B cell (primary cell): ENCODE measurements at regions of chr19 and their contacts with region 1.

Region 1: GRCh38 chr19:46840136-46840942 is 10.3 kb downstream of the AP2S1 start:
- DNase-seq: peak; percentile 82
- ATAC-seq: peak; percentile 95
- H3K4me3 ChIP-seq: no peak overlapping the region
- H3K4me3 Mint-ChIP-seq: no peak overlapping the region
- H3K27ac ChIP-seq: no peak overlapping the region
- H3K27ac Mint-ChIP-seq: no peak overlapping the region
- H3K4me1 ChIP-seq: peaks cover 0 to 6% of the 10 kb centered on the region in 2 donors
- H3K4me1 Mint-ChIP-seq: peaks cover 3% of the 10 kb centered on the region
- H3K27me3 ChIP-seq: no peaks in the 10 kb centered on the region
- H3K27me3 Mint-ChIP-seq: no peaks in the 10 kb centered on the region
- CTCF ChIP-seq: peak; percentile 85

Region 2: DNA sequence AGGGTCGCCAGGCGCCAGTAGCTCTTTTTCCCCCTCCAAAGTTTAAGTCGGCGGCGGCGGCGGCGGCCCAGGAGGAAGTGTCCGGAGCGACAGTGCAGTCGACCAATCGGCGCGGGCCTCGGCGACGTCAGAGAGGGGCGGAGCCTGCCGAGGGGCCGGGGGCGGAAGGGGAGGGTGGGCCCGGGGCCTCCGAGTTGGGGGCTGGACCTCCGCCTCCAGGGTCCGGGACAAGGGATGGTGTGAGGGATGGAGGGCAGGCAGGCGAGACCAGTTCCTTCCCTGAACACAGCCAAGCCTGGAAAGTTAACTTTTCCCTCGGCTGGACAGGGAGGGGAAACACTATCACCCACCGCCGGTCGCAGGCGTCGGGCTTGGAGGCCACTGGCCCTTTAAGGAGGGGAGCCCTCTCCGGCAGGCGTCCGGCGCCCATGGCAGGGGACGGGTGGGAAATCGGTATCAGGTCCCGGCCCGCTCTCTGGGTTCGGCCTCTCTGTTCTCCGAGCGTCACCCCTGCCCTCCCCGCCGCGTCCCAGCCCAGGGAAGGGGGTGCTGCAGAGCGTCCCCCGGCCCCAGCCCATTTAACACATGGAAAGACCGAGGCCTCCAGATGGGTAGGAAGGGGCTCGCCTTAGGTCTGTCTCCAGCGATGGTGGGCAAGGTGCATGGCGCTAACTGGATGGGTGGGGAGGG is 123.2 kb before region 1 on chr19 and contains the start of gene PRKD2:
- CTCF ChIA-PET with region 1: interaction called, 10 read pairs
- POLR2A ChIA-PET with region 1: no interaction called
- intact Hi-C with region 1: no loop called
- DNase-seq: peak; percentile 89
- ATAC-seq: peak; percentile 48
- H3K4me3 ChIP-seq: peak within 1 kb of the TSS; percentile 77 to 99 (median 92)
- H3K4me3 Mint-ChIP-seq: peak within 1 kb of the TSS; percentile 97
- H3K27ac ChIP-seq: peak within 1 kb of the TSS; percentile 89 to 92
- H3K27ac Mint-ChIP-seq: peak within 1 kb of the TSS; percentile 95
- H3K4me1 ChIP-seq: peaks cover 58 to 75% of the 10 kb centered on the region in 2 donors
- H3K4me1 Mint-ChIP-seq: peaks cover 66% of the 10 kb centered on the region
- H3K27me3 ChIP-seq: no peaks in the 10 kb centered on the region
- H3K27me3 Mint-ChIP-seq: no peaks in the 10 kb centered on the region
- CTCF ChIP-seq: no peak
- total RNA-seq, gene PRKD2: 185 and 192 TPM in 2 replicates

Region 3: GRCh38 chr19:46753420-46754155 is 86.8 kb before region 1 on chr19:
- CTCF ChIA-PET with region 1: interaction called, 245 read pairs
- POLR2A ChIA-PET with region 1: interaction called, 4 read pairs
- intact Hi-C with region 1: loop called (anchors 1 kb)
- DNase-seq: peak; percentile 78
- ATAC-seq: peak; percentile 82
- H3K4me3 ChIP-seq: no peak overlapping the region
- H3K4me3 Mint-ChIP-seq: no peak overlapping the region
- H3K27ac ChIP-seq: no peak overlapping the region
- H3K27ac Mint-ChIP-seq: peak overlapping the region; percentile 32
- H3K4me1 ChIP-seq: peaks cover 0 to 7% of the 10 kb centered on the region in 2 donors
- H3K4me1 Mint-ChIP-seq: peaks cover 18% of the 10 kb centered on the region
- H3K27me3 ChIP-seq: no peaks in the 10 kb centered on the region
- H3K27me3 Mint-ChIP-seq: no peaks in the 10 kb centered on the region
- CTCF ChIP-seq: peak; percentile 65

Region 4: DNA sequence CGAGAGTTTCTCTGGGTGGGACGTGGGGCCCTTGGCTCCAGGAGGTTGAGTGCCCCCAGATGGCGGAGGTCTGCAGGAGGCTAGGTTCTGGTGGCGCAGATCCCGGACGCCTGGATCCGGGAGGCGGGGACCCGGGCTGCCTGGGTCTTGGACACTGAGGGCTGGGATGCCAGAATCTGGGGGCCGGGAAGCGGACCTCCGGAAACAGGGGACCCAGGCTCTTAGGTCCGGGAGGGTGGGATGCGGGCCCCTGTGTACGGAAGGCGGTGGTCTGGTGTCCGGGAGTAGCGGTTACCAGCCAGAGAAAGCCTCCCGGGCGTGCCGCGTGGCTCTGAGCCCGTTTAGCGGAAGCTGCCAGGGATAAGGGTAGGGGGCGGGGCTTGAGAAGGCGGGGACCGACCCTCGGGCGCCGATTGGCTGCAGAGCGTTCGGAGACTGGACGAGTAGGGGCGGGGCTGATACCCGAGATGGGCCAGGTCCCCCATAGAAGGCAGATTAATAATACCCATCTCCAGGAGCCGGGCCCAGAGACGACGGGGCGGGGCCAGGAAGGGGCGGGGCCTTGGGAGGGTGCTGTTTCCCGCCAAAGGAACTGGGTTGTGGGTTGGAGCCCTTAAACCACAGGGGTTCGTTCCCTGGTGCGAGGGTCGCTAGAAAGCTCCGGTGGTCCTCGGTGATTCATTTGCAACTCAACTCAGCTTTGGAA is 51.9 kb before region 1 on chr19 and contains the start of gene SLC1A5:
- CTCF ChIA-PET with region 1: interaction called, 22 read pairs
- POLR2A ChIA-PET with region 1: interaction called, 9 read pairs
- intact Hi-C with region 1: loop called (anchors 1 kb)
- DNase-seq: peak; percentile 97
- ATAC-seq: peak; percentile 86
- H3K4me3 ChIP-seq: peak within 1 kb of the TSS; percentile 67 to 95 (median 79)
- H3K4me3 Mint-ChIP-seq: peak within 1 kb of the TSS; percentile 93
- H3K27ac ChIP-seq: peak within 1 kb of the TSS; percentile 40 to 47
- H3K27ac Mint-ChIP-seq: peak within 1 kb of the TSS; percentile 98
- H3K4me1 ChIP-seq: peaks cover 32 to 51% of the 10 kb centered on the region in 2 donors
- H3K4me1 Mint-ChIP-seq: peaks cover 52% of the 10 kb centered on the region
- H3K27me3 ChIP-seq: no peaks in the 10 kb centered on the region
- H3K27me3 Mint-ChIP-seq: no peaks in the 10 kb centered on the region
- CTCF ChIP-seq: no peak
- total RNA-seq, gene SLC1A5: 35.2 and 37.3 TPM in 2 replicates

Region 5: DNA sequence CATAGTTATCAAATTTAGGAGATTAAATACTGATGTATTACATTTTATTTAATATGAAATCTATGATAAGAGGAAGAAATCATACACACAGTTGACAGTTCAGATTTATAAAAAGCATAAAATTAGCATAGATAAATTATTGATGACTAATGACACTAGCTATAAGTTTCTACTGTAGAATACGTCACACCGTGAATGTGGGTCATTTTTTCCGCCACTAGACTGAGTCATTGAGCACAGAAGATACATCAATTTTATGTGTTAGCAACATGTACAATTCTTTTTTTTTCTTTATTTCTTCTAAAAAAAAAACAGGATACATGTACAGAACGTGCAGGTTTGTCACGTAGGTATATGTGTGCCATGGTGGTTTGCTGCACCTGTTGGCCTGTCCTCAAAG is 11.9 kb before region 1 on chr19:
- CTCF ChIA-PET with region 1: interaction called, 56 read pairs
- POLR2A ChIA-PET with region 1: interaction called, 8 read pairs
- intact Hi-C with region 1: loop called (anchors 2 kb)
- DNase-seq: no peak
- ATAC-seq: no peak
- H3K4me3 ChIP-seq: no peak overlapping the region
- H3K4me3 Mint-ChIP-seq: no peak overlapping the region
- H3K27ac ChIP-seq: no peak overlapping the region
- H3K27ac Mint-ChIP-seq: no peak overlapping the region
- H3K4me1 ChIP-seq: peaks cover 23 to 25% of the 10 kb centered on the region in 2 donors
- H3K4me1 Mint-ChIP-seq: peaks cover 21% of the 10 kb centered on the region
- H3K27me3 ChIP-seq: no peaks in the 10 kb centered on the region
- H3K27me3 Mint-ChIP-seq: no peaks in the 10 kb centered on the region
- CTCF ChIP-seq: no peak

Region 6: DNA sequence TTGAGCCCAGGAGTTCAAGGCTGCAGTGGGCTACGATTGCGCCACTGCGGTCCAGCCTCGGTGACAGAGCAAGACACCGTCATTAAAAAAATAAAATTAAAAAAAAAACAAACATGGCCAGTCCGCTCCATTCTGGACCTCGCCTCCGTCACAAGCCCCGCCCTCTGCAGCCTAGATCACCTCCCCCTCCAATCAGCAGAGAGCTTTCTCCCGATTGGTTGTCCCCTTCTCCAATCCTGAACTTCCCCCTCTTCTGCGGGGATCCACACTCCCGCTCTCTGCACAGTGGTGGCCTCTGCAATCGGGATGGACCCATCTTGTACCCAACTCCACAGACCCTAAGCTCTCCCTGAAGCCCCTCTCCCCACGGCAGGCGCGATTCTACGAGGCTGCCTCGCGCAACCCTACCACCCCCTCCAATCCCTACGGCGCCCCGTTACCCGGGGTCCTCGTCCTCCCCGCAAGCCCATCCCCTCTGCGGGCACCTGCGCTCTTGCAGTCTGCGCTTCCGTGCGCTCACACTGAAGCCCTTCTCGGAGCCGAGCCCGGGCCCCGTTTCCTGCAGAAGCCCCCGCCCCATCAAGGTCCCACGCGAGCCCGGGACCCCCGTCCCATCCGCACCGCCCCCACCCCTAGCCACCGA is 207.5 kb after region 1 on chr19:
- CTCF ChIA-PET with region 1: no interaction called
- POLR2A ChIA-PET with region 1: interaction called, 10 read pairs
- intact Hi-C with region 1: no loop called
- DNase-seq: peak; percentile 78
- ATAC-seq: peak; percentile 19
- H3K4me3 ChIP-seq: peak overlapping the region; percentile 55 to 94 (median 84)
- H3K4me3 Mint-ChIP-seq: peak overlapping the region; percentile 96
- H3K27ac ChIP-seq: peak overlapping the region; percentile 8 to 74
- H3K27ac Mint-ChIP-seq: peak overlapping the region; percentile 90
- H3K4me1 ChIP-seq: peaks cover 6 to 17% of the 10 kb centered on the region in 2 donors
- H3K4me1 Mint-ChIP-seq: peaks cover 11% of the 10 kb centered on the region
- H3K27me3 ChIP-seq: no peaks in the 10 kb centered on the region
- H3K27me3 Mint-ChIP-seq: no peaks in the 10 kb centered on the region
- CTCF ChIP-seq: no peak